Activated T-helper 1 cell treated with anti-CD3 and anti-CD28 coated beads, Interleukin-12 subunit alpha, Interleukin-12 subunit beta, Interleukin-2, Interleukin-4 antibody, amounts not matched to agents 30 ng/mL and 10 ng/mL and 1 ng/mL, durations not matched to agents 14 hours and 24 hours and 36 hours (primary cell): ENCODE measurements at regions of chr2 and their contacts with region 1.

Region 1: GRCh38 chr2:64914735-64915509 is 74.3 kb upstream of the SLC1A4 start:
- DNase-seq: no peak
- H3K4me3 Mint-ChIP-seq: no peak overlapping the region
- H3K27ac Mint-ChIP-seq: no peak overlapping the region
- H3K4me1 Mint-ChIP-seq: peaks cover 42% of the 10 kb centered on the region
- H3K27me3 Mint-ChIP-seq: peaks cover 1% of the 10 kb centered on the region

Region 2: GRCh38 chr2:64595397-64596160 is 319.3 kb before region 1 on chr2:
- intact Hi-C with region 1: no loop called
- DNase-seq: no peak
- H3K4me3 Mint-ChIP-seq: no peak overlapping the region
- H3K27ac Mint-ChIP-seq: no peak overlapping the region
- H3K4me1 Mint-ChIP-seq: peaks cover 26% of the 10 kb centered on the region
- H3K27me3 Mint-ChIP-seq: no peaks in the 10 kb centered on the region

Region 3: GRCh38 chr2:64945973-64946768 is 31.2 kb after region 1 on chr2:
- intact Hi-C with region 1: loop called (anchors 1 kb)
- DNase-seq: peak; percentile 71
- H3K4me3 Mint-ChIP-seq: peak overlapping the region; percentile 73
- H3K27ac Mint-ChIP-seq: peak overlapping the region; percentile 93
- H3K4me1 Mint-ChIP-seq: peaks cover 62% of the 10 kb centered on the region
- H3K27me3 Mint-ChIP-seq: no peaks in the 10 kb centered on the region

Region 4: GRCh38 chr2:64988420-64989125 is 73.7 kb after region 1 on chr2:
- intact Hi-C with region 1: loop called (anchors 1 kb)
- DNase-seq: peak; percentile 75
- H3K4me3 Mint-ChIP-seq: peak overlapping the region; percentile 88
- H3K27ac Mint-ChIP-seq: peak overlapping the region; percentile 92
- H3K4me1 Mint-ChIP-seq: peaks cover 79% of the 10 kb centered on the region
- H3K27me3 Mint-ChIP-seq: peaks cover 11% of the 10 kb centered on the region

Region 5: GRCh38 chr2:65040400-65041261 is 125.7 kb after region 1 on chr2:
- intact Hi-C with region 1: loop called (anchors 1 kb)
- DNase-seq: peak; percentile 67
- H3K4me3 Mint-ChIP-seq: no peak overlapping the region
- H3K27ac Mint-ChIP-seq: no peak overlapping the region
- H3K4me1 Mint-ChIP-seq: peaks cover 25% of the 10 kb centered on the region
- H3K27me3 Mint-ChIP-seq: no peaks in the 10 kb centered on the region

Region 6: DNA sequence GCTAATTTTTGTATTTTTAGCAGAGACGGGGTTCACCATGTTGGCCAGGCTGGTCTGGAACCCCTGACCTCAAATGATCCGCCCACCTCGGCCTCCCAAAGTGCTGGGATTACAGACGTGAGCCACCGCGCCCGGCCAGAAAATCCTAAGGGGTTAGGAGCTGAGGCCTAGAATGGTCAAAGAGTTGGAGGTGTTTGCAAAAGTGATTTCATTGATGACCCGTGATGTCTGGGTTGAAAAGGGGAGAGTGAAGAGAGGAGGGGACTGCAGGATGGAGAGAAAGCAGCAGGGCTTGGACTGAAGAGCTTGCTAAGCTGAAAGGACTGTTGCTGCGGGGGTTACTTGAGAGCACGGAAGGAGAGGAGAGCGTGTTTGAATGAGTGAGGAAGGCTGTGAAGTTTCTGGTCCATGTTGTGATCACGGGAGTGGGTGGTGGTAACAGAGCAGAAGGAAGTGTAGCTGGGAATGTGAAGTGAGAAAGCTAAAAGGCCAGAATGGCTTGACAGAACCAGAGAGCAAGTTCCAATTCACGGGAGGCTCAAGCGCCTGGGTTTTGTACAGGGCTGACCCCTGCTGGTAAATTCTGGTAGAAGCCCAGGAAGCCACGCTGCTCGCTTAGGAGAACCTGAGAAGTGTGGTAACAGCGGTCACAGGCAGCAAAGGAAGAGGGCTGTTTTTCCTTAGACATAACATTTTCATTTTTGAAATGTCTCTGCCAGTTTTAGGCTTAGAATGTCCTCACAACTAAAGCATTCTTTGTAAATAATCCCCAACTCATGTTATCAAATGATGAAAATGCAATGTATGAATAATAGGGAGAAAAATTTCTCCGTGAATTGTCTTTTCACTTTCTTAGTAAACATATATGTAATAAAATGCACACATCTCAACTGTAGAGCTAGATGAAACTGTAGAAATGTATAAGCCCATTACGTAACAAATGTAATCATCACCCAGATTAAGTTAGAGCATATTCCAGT is 272.2 kb after region 1 on chr2:
- intact Hi-C with region 1: loop called (anchors 1 kb)
- DNase-seq: peak; percentile 50
- H3K4me3 Mint-ChIP-seq: no peak overlapping the region
- H3K27ac Mint-ChIP-seq: no peak overlapping the region
- H3K4me1 Mint-ChIP-seq: peaks cover 8% of the 10 kb centered on the region
- H3K27me3 Mint-ChIP-seq: peaks cover 16% of the 10 kb centered on the region